ENCODE measurements at regions of chr20 and their contacts with region 1.

Region 1: DNA sequence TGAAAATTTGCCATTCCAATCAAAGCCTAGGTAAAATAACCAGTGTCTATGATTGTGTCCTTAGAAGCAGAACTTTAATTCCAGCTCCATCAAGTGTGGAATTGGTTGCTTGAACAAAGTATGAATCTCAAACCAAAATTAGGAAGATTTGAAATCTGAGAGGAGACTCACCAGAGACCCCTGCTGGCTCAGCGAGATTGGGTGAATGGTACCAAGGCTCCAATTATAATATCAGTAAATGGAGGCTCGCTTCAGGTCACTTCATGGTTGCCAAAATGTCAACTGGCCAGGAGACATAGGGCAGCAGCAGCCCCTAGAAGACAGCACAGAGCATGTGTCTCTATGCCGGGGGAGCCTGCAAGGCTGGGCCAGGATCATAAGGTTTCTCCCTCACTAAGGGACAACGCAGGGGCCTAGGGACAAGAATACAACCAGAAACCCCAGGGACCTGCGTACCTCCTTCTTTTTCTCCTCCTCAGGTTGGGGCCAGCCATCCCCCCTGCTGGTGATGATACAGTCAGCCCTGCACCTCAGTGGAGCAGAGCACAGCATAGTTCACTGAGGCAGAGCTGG is 14.0 kb downstream of the RBL1 start:
- DNase-seq: no peak
- H3K4me3 ChIP-seq: no peak overlapping the region
- CTCF ChIP-seq: peak; percentile 26

Region 2: GRCh38 chr20:37007898-37008649 is 73.7 kb before region 1 on chr20:
- CTCF ChIA-PET with region 1: interaction called, 13 read pairs
- POLR2A ChIA-PET with region 1: no interaction called
- DNase-seq: peak; percentile 24
- H3K4me3 ChIP-seq: no peak overlapping the region
- CTCF ChIP-seq: peak; percentile 21

Region 3: DNA sequence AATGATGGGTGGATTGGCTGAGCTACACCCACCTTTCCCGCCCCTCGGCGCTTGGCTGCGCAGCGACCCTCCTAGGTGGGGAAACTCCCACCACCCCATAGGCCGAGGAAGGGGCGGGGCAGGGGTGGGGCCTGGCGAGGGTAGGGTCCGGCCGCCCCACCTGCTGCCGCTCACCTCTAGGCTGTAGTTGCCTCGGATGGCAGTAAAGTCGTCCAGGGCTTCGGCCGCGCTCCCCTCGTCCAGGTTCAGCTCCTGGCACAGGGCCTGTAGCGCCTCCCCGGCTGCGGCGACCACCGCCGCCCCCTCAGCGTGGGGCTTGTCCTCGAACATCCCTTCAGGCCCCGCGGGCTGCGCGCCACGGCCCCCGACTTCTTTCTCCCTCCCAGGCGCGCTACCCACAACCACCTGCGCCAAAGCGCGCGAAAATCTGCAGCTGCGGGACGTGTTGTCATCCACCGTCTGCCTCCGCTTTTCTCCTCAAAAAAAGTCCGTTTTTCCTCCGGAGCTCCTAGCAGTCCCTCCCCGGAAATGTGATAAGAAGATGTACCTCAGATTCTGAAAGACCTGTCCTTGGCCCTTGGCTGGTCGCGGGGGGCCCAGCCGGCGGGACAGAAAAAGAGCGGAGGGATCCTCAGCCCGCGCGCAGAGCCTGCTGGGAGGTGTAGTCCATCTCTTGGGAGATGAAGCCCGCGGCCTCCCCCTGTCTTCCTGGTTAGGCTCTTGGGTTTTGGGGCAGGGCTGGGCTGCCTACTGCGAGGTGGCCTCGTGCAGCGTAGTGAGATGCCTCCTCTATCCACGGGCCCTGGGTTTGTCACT is 14.0 kb after region 1 on chr20 and contains the start of gene RBL1:
- CTCF ChIA-PET with region 1: interaction called, 21 read pairs
- POLR2A ChIA-PET with region 1: no interaction called
- DNase-seq: peak; percentile 14
- H3K4me3 ChIP-seq: peak within 1 kb of the TSS; percentile 85
- CTCF ChIP-seq: peak; percentile 38

Region 4: DNA sequence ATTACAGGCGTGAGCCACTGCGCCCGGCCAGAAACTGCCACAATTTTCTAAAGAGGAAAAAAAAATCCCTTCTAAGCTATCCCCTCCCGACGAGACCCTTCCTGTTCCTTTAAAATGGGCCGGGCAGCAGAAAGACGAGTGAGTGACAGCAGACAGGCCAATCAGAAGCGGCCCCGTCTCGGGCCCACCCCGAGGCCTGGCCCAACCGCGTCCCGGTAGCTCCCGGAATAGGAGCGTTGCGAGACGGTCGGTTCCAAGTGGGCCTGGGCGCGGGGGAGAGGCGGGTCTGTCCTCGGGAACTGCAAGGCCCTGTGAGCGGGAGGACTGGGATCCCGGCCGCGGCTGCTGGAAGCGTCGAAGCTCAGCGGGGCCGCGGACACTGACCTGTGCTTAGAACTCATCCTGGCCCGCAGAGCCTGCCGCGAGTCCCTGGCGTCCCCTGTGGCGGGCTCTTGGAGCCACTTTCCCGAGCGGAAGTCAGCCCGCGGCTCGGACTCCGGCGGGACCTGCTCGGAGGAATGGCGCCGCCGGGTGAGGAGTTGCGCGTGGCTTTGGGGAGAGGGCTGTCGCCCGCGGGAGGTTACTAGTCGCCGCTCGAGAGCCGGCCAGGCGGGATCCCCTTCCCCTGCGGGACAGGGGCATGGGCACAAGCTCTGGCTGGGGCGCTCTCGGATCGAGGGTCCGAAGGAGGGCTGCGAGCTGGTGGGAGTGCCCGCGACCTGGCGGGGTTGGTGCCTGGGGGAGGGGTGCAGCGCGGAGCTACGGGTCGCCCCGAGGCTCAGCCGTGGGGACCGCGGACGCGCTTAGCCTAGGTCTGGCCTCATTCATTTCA is 97.3 kb after region 1 on chr20 and contains the starts of genes MROH8 and RPN2:
- CTCF ChIA-PET with region 1: no interaction called
- POLR2A ChIA-PET with region 1: no interaction called
- DNase-seq: peak; percentile 85
- H3K4me3 ChIP-seq: peak within 1 kb of the TSS; percentile 90
- CTCF ChIP-seq: no peak